A549 (cell line): ENCODE measurements at regions of chr6 and their contacts with region 1.

Region 1: GRCh38 chr6:72580281-72580940 is 41.5 kb upstream of the KCNQ5 start:
- DNase-seq: peak; percentile 19 to 67
- ATAC-seq: peak; percentile 78 to 89
- H3K4me3 ChIP-seq: no peak overlapping the region
- H3K27ac ChIP-seq: no peak overlapping the region
- H3K4me1 ChIP-seq: no peaks in the 10 kb centered on the region
- CTCF ChIP-seq: peak; percentile 55
- EP300 ChIP-seq: no peak
- POLR2A ChIP-seq: no peak
- RAD21 ChIP-seq: peak; percentile 72 to 75

Region 2: GRCh38 chr6:72418495-72418894 is 161.9 kb before region 1 on chr6:
- CTCF ChIA-PET with region 1: interaction called, 62 read pairs
- POLR2A ChIA-PET with region 1: no interaction called
- DNase-seq: no peak
- ATAC-seq: no peak
- H3K4me3 ChIP-seq: no peak overlapping the region
- H3K27ac ChIP-seq: no peak overlapping the region
- H3K4me1 ChIP-seq: no peaks in the 10 kb centered on the region
- CTCF ChIP-seq: no peak
- EP300 ChIP-seq: no peak
- POLR2A ChIP-seq: no peak
- RAD21 ChIP-seq: no peak

Region 3: DNA sequence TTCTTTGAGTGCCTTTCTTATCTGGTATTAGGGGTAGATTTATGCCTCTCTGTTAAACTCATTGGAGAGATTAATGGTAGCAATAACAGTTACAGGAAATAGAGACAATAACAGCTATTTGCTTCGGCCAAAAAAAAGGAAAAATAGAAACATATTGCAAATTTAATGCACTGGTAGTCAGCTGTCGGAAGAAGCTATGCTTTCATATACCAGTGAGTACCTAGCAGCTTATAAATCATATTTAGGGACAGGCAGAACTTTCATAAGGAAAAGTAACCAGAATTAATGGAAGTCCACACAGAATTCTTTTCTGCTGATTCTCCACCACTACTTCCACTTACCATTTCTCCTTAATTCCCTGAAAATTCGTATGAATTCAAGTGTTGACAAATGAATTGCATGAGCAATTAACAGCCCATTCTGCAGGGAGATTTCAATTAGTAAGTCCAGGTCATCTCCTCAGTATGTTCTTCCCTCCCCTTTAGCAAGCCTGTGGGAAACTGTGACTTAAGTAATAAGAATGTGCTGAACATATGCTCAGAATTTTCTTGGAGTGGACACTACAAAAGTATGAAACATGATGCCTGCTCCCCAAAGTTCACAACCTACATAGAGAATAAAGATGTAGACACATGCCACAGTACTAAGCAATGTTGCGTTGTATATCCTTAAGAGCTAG is 155.3 kb before region 1 on chr6:
- CTCF ChIA-PET with region 1: interaction called, 12 read pairs
- POLR2A ChIA-PET with region 1: no interaction called
- DNase-seq: no peak
- ATAC-seq: no peak
- H3K4me3 ChIP-seq: no peak overlapping the region
- H3K27ac ChIP-seq: no peak overlapping the region
- H3K4me1 ChIP-seq: no peaks in the 10 kb centered on the region
- CTCF ChIP-seq: no peak
- EP300 ChIP-seq: no peak
- POLR2A ChIP-seq: no peak
- RAD21 ChIP-seq: no peak